ENCODE measurements at regions of chr10 and their contacts with region 1.

Region 1: DNA sequence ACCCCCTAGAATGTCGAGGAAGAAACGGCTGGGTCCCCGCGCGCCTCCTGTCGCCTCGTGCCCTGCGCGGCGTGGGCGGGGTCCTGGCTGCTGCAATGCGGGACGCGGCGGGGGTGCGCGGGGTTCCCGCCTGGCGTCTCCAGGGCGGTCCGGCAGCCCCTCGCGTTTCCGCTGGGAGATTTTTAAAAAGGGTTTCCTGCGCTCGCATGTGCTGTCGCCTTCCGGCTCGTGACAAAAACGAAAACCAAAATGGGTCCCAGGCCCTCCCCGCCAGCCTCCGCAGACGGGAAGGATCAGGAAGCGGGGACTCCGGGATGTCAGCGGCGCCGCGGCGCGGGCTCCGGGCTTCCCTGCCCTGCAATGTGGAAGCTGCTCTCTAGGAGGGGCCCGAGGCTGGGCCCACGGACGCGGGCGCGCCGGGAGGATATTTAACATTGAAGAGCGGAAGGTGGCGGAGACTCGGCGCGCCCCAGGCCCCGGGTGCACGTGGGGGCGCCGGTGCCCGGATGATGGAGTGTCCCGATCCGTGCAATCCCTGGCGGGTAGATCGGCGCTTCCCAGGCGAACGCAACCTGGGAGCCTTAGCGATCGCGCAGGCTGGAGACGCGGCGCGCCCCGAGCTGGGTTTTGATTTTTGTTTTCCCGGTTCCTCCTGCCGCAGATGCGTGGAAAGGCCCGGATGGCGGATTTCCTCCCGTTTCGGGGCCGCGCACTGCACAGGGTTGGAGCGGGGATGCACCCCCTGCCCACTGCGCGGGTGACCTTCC is 1.0 kb downstream of the PFKP start:
- DNase-seq: peak; percentile 75 to 88
- ATAC-seq: peak; percentile 81
- H3K4me3 ChIP-seq: peak overlapping the region; percentile 74 to 88
- H3K27ac ChIP-seq: no peak overlapping the region
- H3K4me1 ChIP-seq: peaks cover 0 to 4% of the 10 kb centered on the region in 2 donors
- H3K27me3 ChIP-seq: no peaks in the 10 kb centered on the region

Region 2: GRCh38 chr10:3095373-3096139 is 27.2 kb after region 1 on chr10:
- intact Hi-C with region 1: loop called in 1 of 2 experiments (anchors 2 kb)
- DNase-seq: no peak
- ATAC-seq: peak; percentile 87
- H3K4me3 ChIP-seq: no peak overlapping the region
- H3K27ac ChIP-seq: peak overlapping the region; percentile 46 to 94
- H3K4me1 ChIP-seq: peaks cover 2 to 3% of the 10 kb centered on the region in 2 donors
- H3K27me3 ChIP-seq: no peaks in the 10 kb centered on the region

Region 3: DNA sequence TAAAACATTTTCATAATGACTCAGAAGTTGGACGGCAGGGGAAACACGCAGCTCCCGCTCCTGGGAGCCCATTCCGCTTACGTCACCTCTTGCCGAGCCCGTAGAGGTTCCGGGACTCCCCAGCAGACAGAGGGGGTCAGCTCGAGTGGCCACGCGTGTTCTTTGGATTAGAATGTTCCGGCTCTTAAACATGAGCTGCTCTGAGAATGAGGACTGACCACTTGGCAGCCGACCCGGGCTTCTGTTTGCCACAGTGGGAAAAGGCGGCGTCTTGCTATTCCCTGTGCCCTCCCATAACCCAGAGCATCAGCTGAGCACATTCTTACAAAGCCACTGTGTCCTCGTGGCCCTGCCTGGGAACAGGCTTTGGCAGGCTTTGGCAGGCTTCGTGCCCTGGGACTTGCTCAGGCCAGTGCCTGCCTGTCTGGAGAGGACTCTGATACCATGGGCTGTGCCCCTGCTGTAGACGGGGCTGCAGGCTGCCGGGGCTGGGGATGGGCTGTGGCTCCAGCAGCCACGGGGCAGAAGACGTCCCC is 39.1 kb after region 1 on chr10:
- intact Hi-C with region 1: loop called in 1 of 2 experiments (anchors 5 kb)
- DNase-seq: peak; percentile 94 to 96
- ATAC-seq: peak; percentile 90
- H3K4me3 ChIP-seq: no peak overlapping the region
- H3K27ac ChIP-seq: peak overlapping the region; percentile 63 to 66
- H3K4me1 ChIP-seq: no peaks in the 10 kb centered on the region
- H3K27me3 ChIP-seq: no peaks in the 10 kb centered on the region